HCT116 (cell line): ENCODE measurements at regions of chr1 and their contacts with region 1.

Region 1: GRCh38 chr1:31394628-31395193 is 18.3 kb upstream of the SERINC2 start:
- DNase-seq: peak; percentile 71
- ATAC-seq: peak; percentile 85
- H3K4me3 ChIP-seq: peak overlapping the region; percentile 21 to 45
- H3K27ac ChIP-seq: no peak overlapping the region
- H3K4me1 ChIP-seq: peaks cover 6 to 50% of the 10 kb centered on the region in 2 experiments; a peak in 2 of 4 replicates
- H3K27me3 ChIP-seq: no peaks in the 10 kb centered on the region
- CTCF ChIP-seq: peak; percentile 81 to 94 (median 88)
- POLR2A ChIP-seq: no peak
- RAD21 ChIP-seq: peak; percentile 89

Region 2: DNA sequence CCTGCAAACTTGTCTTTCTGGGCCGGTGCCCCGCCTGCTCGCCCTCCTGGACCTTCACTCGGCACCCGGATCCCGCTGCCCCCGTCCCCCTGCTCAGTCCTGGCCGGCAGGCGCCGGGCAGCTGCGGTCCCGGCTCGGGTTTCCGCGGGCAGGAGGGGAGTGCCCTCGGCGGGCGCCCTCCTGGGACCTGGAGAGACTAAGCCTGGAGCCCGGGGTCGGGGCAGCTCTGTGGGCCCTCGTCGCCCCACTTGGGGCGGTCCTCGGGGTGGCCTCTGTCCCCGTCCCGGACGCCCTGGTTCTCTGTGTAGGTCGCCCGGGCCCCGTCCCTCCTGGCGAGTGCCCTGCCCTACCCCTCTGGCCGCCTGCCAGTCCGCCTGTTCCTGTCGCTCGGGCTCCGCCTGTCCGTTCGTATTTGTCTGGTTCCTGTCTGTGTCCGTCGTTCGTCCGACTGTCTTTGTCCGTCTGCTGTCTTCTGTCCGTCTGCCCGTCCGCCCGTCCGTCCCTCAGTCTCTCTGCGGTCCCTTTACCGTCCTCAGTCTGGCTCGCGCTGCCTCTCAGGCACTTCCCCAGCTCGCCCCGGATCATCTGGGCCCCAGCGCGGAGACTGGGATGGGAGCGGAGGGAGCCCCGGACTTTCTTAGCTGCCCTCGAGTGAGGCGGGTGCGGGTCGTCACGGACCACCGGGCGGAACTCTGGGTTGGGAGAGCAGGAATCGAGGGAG is 18.9 kb after region 1 on chr1:
- CTCF ChIA-PET with region 1: interaction called, 10 read pairs
- POLR2A ChIA-PET with region 1: interaction called, 3 read pairs
- RAD21 ChIA-PET with region 1: no interaction called
- intact Hi-C with region 1: no loop called
- DNase-seq: no peak
- ATAC-seq: peak; percentile 65
- H3K4me3 ChIP-seq: peak overlapping the region; percentile 84 to 98
- H3K27ac ChIP-seq: peak overlapping the region; percentile 66
- H3K4me1 ChIP-seq: peaks cover 8 to 46% of the 10 kb centered on the region in 2 experiments; a peak in 3 of 4 replicates
- H3K27me3 ChIP-seq: no peaks in the 10 kb centered on the region
- CTCF ChIP-seq: no peak
- POLR2A ChIP-seq: no peak
- RAD21 ChIP-seq: no peak

Region 3: GRCh38 chr1:31422505-31423319 is 28.0 kb after region 1 on chr1:
- CTCF ChIA-PET with region 1: interaction called, 35 read pairs
- POLR2A ChIA-PET with region 1: interaction called, 4 read pairs
- RAD21 ChIA-PET with region 1: interaction called, 5 to 12 read pairs
- intact Hi-C with region 1: loop called (anchors 1 kb)
- DNase-seq: peak; percentile 84
- ATAC-seq: peak; percentile 89
- H3K4me3 ChIP-seq: peak overlapping the region in 1 of 2 experiments; percentile 10; a peak in 1 of 4 replicates
- H3K27ac ChIP-seq: peak overlapping the region; percentile 38
- H3K4me1 ChIP-seq: peaks cover 13 to 65% of the 10 kb centered on the region in 2 experiments
- H3K27me3 ChIP-seq: no peaks in the 10 kb centered on the region
- CTCF ChIP-seq: peak; percentile 95 to 98 (median 95)
- POLR2A ChIP-seq: no peak
- RAD21 ChIP-seq: peak; percentile 96

Region 4: GRCh38 chr1:31548907-31549808 is 154.4 kb after region 1 on chr1:
- CTCF ChIA-PET with region 1: interaction called, 98 read pairs
- POLR2A ChIA-PET with region 1: interaction called, 7 read pairs
- RAD21 ChIA-PET with region 1: interaction called, 9 to 10 read pairs
- intact Hi-C with region 1: loop called (anchors 1 kb)
- DNase-seq: peak; percentile 84
- ATAC-seq: peak; percentile 92
- H3K4me3 ChIP-seq: peak overlapping the region; percentile 41 to 52
- H3K27ac ChIP-seq: peak overlapping the region; percentile 44
- H3K4me1 ChIP-seq: peaks cover 12 to 21% of the 10 kb centered on the region in 2 experiments; a peak in 3 of 4 replicates
- H3K27me3 ChIP-seq: no peaks in the 10 kb centered on the region
- CTCF ChIP-seq: peak; percentile 89 to 98 (median 96)
- POLR2A ChIP-seq: peak; percentile 23
- RAD21 ChIP-seq: peak; percentile 96

Region 5: DNA sequence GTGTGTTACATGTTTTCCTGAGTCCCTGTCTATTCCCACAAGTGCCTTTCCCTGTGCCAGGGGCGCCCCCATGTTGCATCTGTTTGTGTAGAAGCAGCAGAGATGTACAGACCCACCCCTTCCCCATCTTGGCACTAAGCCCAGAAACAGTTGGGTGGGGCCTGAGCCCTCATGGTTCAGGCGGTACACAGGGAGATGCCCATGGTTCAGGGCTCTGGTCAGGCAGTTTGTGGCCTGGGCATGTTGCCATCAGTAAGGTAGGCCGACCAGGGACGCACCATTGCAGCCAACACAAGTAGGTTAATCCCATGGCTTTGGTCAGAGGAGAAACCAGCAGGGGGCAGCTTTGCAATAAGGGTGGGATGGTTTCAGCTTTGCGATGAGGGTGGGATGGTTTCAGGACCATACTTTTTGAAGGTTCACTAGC is 370.3 kb after region 1 on chr1:
- CTCF ChIA-PET with region 1: no interaction called
- POLR2A ChIA-PET with region 1: no interaction called
- RAD21 ChIA-PET with region 1: no interaction called
- intact Hi-C with region 1: no loop called
- DNase-seq: no peak
- ATAC-seq: no peak
- H3K4me3 ChIP-seq: no peak overlapping the region
- H3K27ac ChIP-seq: no peak overlapping the region
- H3K4me1 ChIP-seq: peaks cover 31 to 53% of the 10 kb centered on the region in 2 experiments
- H3K27me3 ChIP-seq: no peaks in the 10 kb centered on the region
- CTCF ChIP-seq: peak; percentile 32 to 45 (median 38); a peak in 5 of 6 replicates
- POLR2A ChIP-seq: no peak
- RAD21 ChIP-seq: peak; percentile 58